ENCODE measurements at regions of chr12 and their contacts with region 1.

Region 1: GRCh38 chr12:56117778-56118687 is at the start of gene ZC3H10:
- DNase-seq: peak; percentile 99
- H3K4me3 ChIP-seq: peak within 1 kb of the TSS; percentile 98
- H3K27ac ChIP-seq: peak within 1 kb of the TSS; percentile 96
- H3K4me1 ChIP-seq: peaks cover 26% of the 10 kb centered on the region
- H3K27me3 ChIP-seq: no peaks in the 10 kb centered on the region
- CTCF ChIP-seq: peak; percentile 29; the same call in 1 of the 2 replicates
- total RNA-seq, gene ZC3H10: 4.4 and 6.5 TPM in 2 replicates

Region 2: DNA sequence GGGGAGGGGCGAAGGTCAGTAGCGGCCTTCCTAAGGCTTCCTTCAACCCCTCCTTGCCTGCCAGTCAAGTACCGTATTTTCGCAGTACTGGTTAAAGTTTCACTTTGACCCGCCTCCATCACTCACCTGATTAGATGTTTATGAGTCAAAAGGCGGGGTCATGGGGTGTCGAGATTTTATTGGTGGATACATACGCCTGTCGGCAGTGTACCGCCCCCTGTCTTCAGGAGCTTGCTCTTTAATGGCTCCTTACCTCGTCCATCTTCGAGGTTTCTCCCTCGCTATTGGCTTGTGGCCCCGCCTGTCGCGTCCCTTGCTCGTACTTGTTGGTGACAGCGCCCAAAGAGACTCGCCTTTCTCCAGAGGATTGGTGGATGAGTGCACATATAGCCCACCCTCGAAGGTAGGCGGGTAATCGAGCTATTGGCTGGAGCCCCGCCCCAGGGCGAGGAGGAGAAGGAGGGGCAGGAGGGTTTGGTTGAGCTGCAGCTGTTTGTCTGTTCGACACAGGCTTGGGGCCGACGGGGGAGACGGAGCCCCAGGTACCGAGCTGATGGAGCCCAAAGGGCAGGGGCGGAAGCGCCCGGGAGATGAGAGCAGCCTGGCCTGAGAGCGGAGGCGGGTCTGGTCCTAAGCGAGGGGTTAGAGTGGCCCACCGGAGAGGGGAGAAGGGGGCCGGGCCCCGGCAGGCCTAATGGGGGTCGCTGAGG is 144.3 kb before region 1 on chr12 and contains the start of gene RAB5B:
- CTCF ChIA-PET with region 1: no interaction called
- POLR2A ChIA-PET with region 1: interaction called, 4 read pairs
- intact Hi-C with region 1: loop called (anchors 5 kb)
- DNase-seq: peak; percentile 98 to 100
- H3K4me3 ChIP-seq: peak within 1 kb of the TSS; percentile 93
- H3K27ac ChIP-seq: peak within 1 kb of the TSS; percentile 86
- H3K4me1 ChIP-seq: peaks cover 27% of the 10 kb centered on the region
- H3K27me3 ChIP-seq: no peaks in the 10 kb centered on the region
- CTCF ChIP-seq: peak; percentile 70
- total RNA-seq, gene RAB5B: 98.6 and 122 TPM in 2 replicates

Region 3: GRCh38 chr12:56104109-56104814 is 13.8 kb before region 1 on chr12 and contains the start of gene PA2G4:
- CTCF ChIA-PET with region 1: interaction called, 13 read pairs
- POLR2A ChIA-PET with region 1: interaction called, 4 read pairs
- intact Hi-C with region 1: loop called (anchors 1 kb)
- DNase-seq: peak; percentile 97 to 98
- H3K4me3 ChIP-seq: peak within 1 kb of the TSS; percentile 97
- H3K27ac ChIP-seq: peak within 1 kb of the TSS; percentile 50
- H3K4me1 ChIP-seq: peaks cover 25% of the 10 kb centered on the region
- H3K27me3 ChIP-seq: no peaks in the 10 kb centered on the region
- CTCF ChIP-seq: no peak
- total RNA-seq, gene PA2G4: 120 and 159 TPM in 2 replicates

Region 4: DNA sequence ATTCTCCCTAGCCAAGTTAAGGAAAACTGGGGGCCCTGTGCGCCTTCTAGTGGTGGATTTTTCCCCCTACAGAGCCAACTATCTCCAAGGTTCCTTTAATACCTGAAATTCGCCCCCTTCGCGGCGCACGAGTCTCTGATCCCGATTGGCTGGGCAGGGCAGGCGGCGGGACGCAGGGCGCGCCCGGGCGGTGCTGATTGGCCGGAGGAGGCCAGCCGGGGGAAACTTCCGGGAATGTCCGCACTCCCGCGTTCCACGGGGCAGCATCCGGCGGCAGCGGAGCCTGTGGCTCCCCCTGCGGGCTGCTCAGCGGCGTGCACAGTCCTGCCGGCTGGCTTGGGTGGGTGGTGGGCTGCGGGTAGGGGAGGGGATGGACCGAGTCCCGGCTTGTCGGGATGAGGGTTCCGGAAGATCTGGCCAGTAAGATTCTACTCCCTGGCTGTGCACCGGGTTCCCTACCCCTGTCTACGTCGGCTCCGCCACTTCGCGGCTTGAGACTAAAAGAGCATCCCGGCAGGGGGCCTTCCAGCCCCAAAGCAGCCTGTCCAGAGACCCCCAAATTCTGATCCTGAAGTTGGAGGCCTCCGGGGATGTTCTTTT is 106.2 kb after region 1 on chr12 and contains the start of gene NABP2:
- CTCF ChIA-PET with region 1: interaction called, 5 read pairs
- POLR2A ChIA-PET with region 1: interaction called, 10 read pairs
- intact Hi-C with region 1: loop called (anchors 1 kb)
- DNase-seq: peak; percentile 92 to 98
- H3K4me3 ChIP-seq: peak within 1 kb of the TSS; percentile 91
- H3K27ac ChIP-seq: no peak within 1 kb of the TSS
- H3K4me1 ChIP-seq: peaks cover 27% of the 10 kb centered on the region
- H3K27me3 ChIP-seq: no peaks in the 10 kb centered on the region
- CTCF ChIP-seq: peak; percentile 81
- total RNA-seq, gene NABP2: 58.2 and 68.5 TPM in 2 replicates

Region 5: GRCh38 chr12:56299853-56300643 is 182.0 kb after region 1 on chr12 and contains the start of gene CS:
- CTCF ChIA-PET with region 1: no interaction called
- POLR2A ChIA-PET with region 1: no interaction called
- intact Hi-C with region 1: loop called (anchors 1 kb)
- DNase-seq: peak; percentile 93 to 97
- H3K4me3 ChIP-seq: peak within 1 kb of the TSS; percentile 88
- H3K27ac ChIP-seq: peak within 1 kb of the TSS; percentile 31
- H3K4me1 ChIP-seq: peaks cover 33% of the 10 kb centered on the region
- H3K27me3 ChIP-seq: no peaks in the 10 kb centered on the region
- CTCF ChIP-seq: no peak
- total RNA-seq, gene CS: 203 and 205 TPM in 2 replicates

Region 6: GRCh38 chr12:56593909-56594621 is 476.0 kb after region 1 on chr12:
- CTCF ChIA-PET with region 1: no interaction called
- POLR2A ChIA-PET with region 1: no interaction called
- intact Hi-C with region 1: loop called (anchors 1 kb)
- DNase-seq: peak in 1 of 2 experiments; percentile 56
- H3K4me3 ChIP-seq: no peak overlapping the region
- H3K27ac ChIP-seq: peak overlapping the region; percentile 35; the same call in 1 of the 2 replicates
- H3K4me1 ChIP-seq: no peaks in the 10 kb centered on the region
- H3K27me3 ChIP-seq: no peaks in the 10 kb centered on the region
- CTCF ChIP-seq: peak; percentile 89